ENCODE measurements at regions of chr11 and their contacts with region 1.

Region 1: DNA sequence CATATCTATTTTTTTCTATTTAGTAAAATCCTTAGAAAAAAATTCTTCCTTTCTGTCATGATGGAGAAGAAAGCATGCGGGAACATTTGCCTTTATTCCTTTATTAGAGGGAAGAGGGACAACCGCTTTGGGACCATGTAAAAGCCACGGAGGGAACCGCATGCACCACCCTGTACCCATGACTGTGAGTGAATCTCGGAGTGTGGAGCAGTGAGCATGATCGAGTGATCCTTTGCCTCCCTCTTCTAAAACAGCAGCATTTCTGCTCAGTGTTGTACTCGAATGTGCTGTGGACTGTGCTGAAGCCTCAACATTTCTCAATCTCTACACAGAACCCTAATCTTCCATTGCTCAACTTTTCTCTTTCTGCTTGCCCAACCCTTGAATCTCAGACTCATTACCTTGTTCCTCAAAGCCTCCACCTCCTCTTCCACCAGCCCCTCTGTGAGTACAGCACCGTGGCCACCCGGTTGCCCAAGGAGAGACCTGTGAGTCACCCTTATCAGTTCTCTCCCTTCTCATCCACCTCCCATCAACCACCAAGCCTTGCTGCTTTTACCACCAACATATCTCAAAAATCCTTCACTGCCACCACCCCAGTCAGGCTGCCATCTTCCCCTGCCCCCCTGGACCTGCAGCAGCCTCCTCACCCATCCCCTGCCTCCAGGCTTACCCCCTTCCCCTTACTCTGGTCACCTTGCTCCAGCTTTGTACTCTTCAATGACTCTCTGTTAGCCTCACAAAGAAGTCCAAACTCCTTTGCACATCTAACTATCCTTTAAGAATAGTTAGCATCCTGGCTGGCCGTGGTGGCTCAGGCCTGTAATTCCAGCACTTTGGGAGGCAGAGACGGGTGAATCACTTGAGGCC is 103.1 kb downstream of the NAT10 start:
- DNase-seq: no peak
- ATAC-seq: peak in 2 of 4 donors; percentile 33 to 51
- H3K4me3 ChIP-seq: no peak overlapping the region
- H3K27ac ChIP-seq: no peak overlapping the region
- H3K4me1 ChIP-seq: peaks cover 0 to 27% (median 4%) of the 10 kb centered on the region in 12 donors
- H3K27me3 ChIP-seq: no peaks in the 10 kb centered on the region
- CTCF ChIP-seq: no peak
- POLR2A ChIP-seq: no peak

Region 2: GRCh38 chr11:34266090-34266912 is 57.8 kb after region 1 on chr11:
- intact Hi-C with region 1: loop called in 1 of 10 experiments (anchors 2 kb)
- DNase-seq: peak in 3 of 5 donors; percentile 45 to 53 (median 52)
- ATAC-seq: peak; percentile 24 to 75 (median 66)
- H3K4me3 ChIP-seq: no peak overlapping the region
- H3K27ac ChIP-seq: peak overlapping the region in 7 of 12 donors; percentile 33 to 60 (median 49)
- H3K4me1 ChIP-seq: peaks cover 0 to 59% (median 29%) of the 10 kb centered on the region in 12 donors
- H3K27me3 ChIP-seq: peaks cover 0 to 4% (median 0%) of the 10 kb centered on the region in 9 donors
- CTCF ChIP-seq: no peak
- POLR2A ChIP-seq: no peak

Region 3: GRCh38 chr11:34585735-34586487 is 377.4 kb after region 1 on chr11:
- intact Hi-C with region 1: no loop called
- DNase-seq: no peak
- ATAC-seq: peak in 2 of 4 donors; percentile 35 to 56
- H3K4me3 ChIP-seq: peak overlapping the region in 4 of 12 donors; percentile 12 to 44 (median 18)
- H3K27ac ChIP-seq: no peak overlapping the region
- H3K4me1 ChIP-seq: peaks cover 0 to 8% (median 0%) of the 10 kb centered on the region in 12 donors
- H3K27me3 ChIP-seq: peaks cover 0 to 3% (median 0%) of the 10 kb centered on the region in 9 donors
- CTCF ChIP-seq: peak; percentile 42 to 79 (median 66)
- POLR2A ChIP-seq: no peak